PC-9 (cell line): ENCODE measurements at regions of chr6 and their contacts with region 1.

Region 1: GRCh38 chr6:57316581-57317059 is 810 bp upstream of the PRIM2 start:
- DNase-seq: peak; percentile 84 to 85
- H3K4me3 ChIP-seq: peak overlapping the region; percentile 90
- H3K27ac ChIP-seq: no peak overlapping the region
- H3K4me1 ChIP-seq: peaks cover 22% of the 10 kb centered on the region
- H3K27me3 ChIP-seq: no peaks in the 10 kb centered on the region
- CTCF ChIP-seq: peak; percentile 92

Region 2: GRCh38 chr6:56637640-56638039 is 679.0 kb before region 1 on chr6:
- CTCF ChIA-PET with region 1: no interaction called
- POLR2A ChIA-PET with region 1: no interaction called
- intact Hi-C with region 1: loop called (anchors 10 kb)
- DNase-seq: peak in 1 of 2 experiments; percentile 44
- H3K4me3 ChIP-seq: no peak overlapping the region
- H3K27ac ChIP-seq: no peak overlapping the region
- H3K4me1 ChIP-seq: peaks cover 2% of the 10 kb centered on the region; the same call in 1 of the 2 replicates
- H3K27me3 ChIP-seq: no peaks in the 10 kb centered on the region
- CTCF ChIP-seq: peak; percentile 79

Region 3: DNA sequence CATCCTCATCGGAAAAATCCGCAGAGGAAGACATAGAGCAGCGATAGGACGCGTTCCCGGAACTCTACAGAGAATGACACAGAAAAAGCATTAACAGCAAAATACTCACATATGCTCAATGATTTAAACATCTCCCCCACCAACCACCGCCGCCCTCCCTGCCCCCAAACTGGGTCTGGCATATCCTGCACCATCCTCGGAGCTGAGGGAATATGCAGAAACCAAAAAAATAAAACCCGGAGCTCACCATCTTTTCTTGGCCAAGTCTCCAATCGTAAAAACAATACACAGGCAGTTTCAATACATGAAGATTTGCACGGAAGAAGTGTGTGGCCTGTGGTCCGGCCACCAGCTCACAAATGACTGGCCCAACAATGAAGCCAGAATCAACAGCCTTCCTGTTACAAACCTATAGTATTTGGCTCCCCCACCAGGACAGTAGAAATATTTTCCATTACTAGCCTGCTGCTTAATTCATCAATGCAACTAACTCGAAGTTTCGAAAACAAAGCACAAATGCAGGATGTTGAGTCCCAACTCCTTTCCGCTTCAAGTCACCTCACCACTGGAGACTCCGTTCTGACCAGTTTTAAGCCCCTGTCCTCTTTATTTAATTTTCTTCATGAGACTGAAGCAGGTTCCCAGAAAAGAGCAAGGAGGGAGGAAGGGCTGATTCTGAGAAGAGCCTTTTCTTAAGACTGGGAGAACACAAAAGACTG is 464.9 kb before region 1 on chr6:
- CTCF ChIA-PET with region 1: no interaction called
- POLR2A ChIA-PET with region 1: no interaction called
- intact Hi-C with region 1: loop called (anchors 5 kb)
- DNase-seq: peak; percentile 28 to 73
- H3K4me3 ChIP-seq: peak overlapping the region; percentile 75
- H3K27ac ChIP-seq: peak overlapping the region; percentile 88
- H3K4me1 ChIP-seq: peaks cover 43% of the 10 kb centered on the region
- H3K27me3 ChIP-seq: no peaks in the 10 kb centered on the region
- CTCF ChIP-seq: peak; percentile 76

Region 4: GRCh38 chr6:56962451-56962850 is 354.2 kb before region 1 on chr6:
- CTCF ChIA-PET with region 1: no interaction called
- POLR2A ChIA-PET with region 1: no interaction called
- intact Hi-C with region 1: no loop called
- DNase-seq: no peak
- H3K4me3 ChIP-seq: no peak overlapping the region
- H3K27ac ChIP-seq: no peak overlapping the region
- H3K4me1 ChIP-seq: peaks cover 14% of the 10 kb centered on the region
- H3K27me3 ChIP-seq: no peaks in the 10 kb centered on the region
- CTCF ChIP-seq: no peak

Region 5: GRCh38 chr6:57190140-57190539 is 126.5 kb before region 1 on chr6:
- CTCF ChIA-PET with region 1: interaction called, 3 read pairs
- POLR2A ChIA-PET with region 1: no interaction called
- intact Hi-C with region 1: loop called (anchors 1 kb)
- DNase-seq: no peak
- H3K4me3 ChIP-seq: no peak overlapping the region
- H3K27ac ChIP-seq: no peak overlapping the region
- H3K4me1 ChIP-seq: no peaks in the 10 kb centered on the region
- H3K27me3 ChIP-seq: no peaks in the 10 kb centered on the region
- CTCF ChIP-seq: peak; percentile 45; the same call in 1 of the 2 replicates

Region 6: GRCh38 chr6:57267586-57268293 is 48.9 kb before region 1 on chr6:
- CTCF ChIA-PET with region 1: interaction called, 9 read pairs
- POLR2A ChIA-PET with region 1: interaction called, 6 read pairs
- intact Hi-C with region 1: loop called (anchors 1 kb)
- DNase-seq: peak; percentile 69 to 88
- H3K4me3 ChIP-seq: no peak overlapping the region
- H3K27ac ChIP-seq: peak overlapping the region; percentile 21; the same call in 1 of the 2 replicates
- H3K4me1 ChIP-seq: peaks cover 8% of the 10 kb centered on the region
- H3K27me3 ChIP-seq: no peaks in the 10 kb centered on the region
- CTCF ChIP-seq: peak; percentile 77

Region 7: DNA sequence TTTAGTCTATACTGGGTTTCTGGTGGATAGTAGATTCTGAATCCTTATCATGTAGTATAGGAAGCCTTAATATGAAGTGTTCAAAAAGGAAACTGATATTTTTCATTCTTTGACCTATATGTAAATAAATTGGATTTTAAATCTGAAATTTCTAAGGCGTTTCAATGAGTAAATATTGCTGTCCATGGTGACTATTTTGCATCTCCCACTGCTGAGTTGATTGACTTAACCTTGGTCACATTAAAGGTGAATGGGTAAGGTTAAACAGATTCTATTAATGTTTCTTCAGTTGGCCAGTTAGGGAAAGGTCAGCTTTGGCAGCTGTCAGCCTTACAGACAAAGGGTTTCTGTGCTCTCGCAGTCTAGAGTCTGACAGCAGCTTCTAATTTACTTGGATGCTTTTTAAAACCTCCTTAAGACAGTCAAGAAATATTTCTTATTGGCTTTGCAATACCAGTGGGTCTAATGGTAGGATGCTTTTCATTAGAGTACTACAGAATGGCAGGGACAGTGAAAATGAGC is 25.6 kb after region 1 on chr6:
- CTCF ChIA-PET with region 1: no interaction called
- POLR2A ChIA-PET with region 1: no interaction called
- intact Hi-C with region 1: no loop called
- DNase-seq: no peak
- H3K4me3 ChIP-seq: no peak overlapping the region
- H3K27ac ChIP-seq: no peak overlapping the region
- H3K4me1 ChIP-seq: no peaks in the 10 kb centered on the region
- H3K27me3 ChIP-seq: no peaks in the 10 kb centered on the region
- CTCF ChIP-seq: no peak